HCT116 (cell line): ENCODE measurements at regions of chr1 and their contacts with region 1.

Region 1: GRCh38 chr1:34597877-34598514 is 156.9 kb upstream of the GJB5 start:
- DNase-seq: peak; percentile 50
- ATAC-seq: peak; percentile 98
- H3K4me3 ChIP-seq: no peak overlapping the region
- H3K27ac ChIP-seq: no peak overlapping the region
- H3K4me1 ChIP-seq: no peaks in the 10 kb centered on the region
- H3K27me3 ChIP-seq: peaks cover 28% of the 10 kb centered on the region
- CTCF ChIP-seq: peak; percentile 76 to 98 (median 94)
- POLR2A ChIP-seq: no peak
- RAD21 ChIP-seq: peak; percentile 90

Region 2: DNA sequence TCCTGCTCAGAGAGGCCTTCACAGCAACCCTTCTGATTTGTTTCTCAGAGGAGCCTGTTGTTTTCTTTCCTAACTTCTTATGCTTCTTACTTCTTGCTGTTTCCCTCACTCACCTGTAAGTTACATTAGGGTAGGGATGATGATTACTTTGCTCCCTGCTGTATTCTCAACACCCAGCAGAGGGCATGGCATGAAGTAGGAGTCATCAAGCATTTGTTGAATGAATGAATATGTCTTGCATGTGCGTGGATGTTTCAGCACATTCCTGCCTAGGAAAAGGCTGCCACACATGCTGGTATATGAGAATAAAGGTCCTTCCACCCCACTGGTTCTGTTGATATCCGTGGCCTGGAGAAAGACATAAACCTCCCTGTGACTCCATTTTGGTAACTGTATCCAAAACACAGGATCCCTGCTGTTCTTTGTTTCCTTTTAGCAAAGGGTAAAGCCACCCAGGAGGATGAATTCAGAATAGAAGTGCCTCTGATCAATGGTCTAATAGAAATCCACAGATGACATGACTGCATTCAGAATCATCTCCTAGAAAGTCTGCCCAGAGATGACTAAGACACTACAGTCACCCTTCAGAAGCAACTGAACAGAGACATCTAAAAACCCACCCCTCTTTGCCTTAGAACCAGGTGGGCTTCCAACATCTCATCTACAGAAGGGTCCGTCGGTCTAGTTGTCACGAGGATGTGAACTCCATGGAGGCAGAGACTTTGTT is 956.7 kb before region 1 on chr1:
- CTCF ChIA-PET with region 1: no interaction called
- POLR2A ChIA-PET with region 1: no interaction called
- RAD21 ChIA-PET with region 1: no interaction called
- intact Hi-C with region 1: loop called (anchors 1 kb)
- DNase-seq: peak; percentile 32
- ATAC-seq: peak; percentile 89
- H3K4me3 ChIP-seq: no peak overlapping the region
- H3K27ac ChIP-seq: no peak overlapping the region
- H3K4me1 ChIP-seq: no peaks in the 10 kb centered on the region
- H3K27me3 ChIP-seq: peaks cover 35% of the 10 kb centered on the region; the same call in 1 of the 2 replicates
- CTCF ChIP-seq: peak; percentile 40 to 68 (median 65); a peak in 5 of 6 replicates
- POLR2A ChIP-seq: no peak
- RAD21 ChIP-seq: peak; percentile 52

Region 3: GRCh38 chr1:33735621-33736020 is 862.4 kb before region 1 on chr1:
- CTCF ChIA-PET with region 1: no interaction called
- POLR2A ChIA-PET with region 1: no interaction called
- RAD21 ChIA-PET with region 1: no interaction called
- intact Hi-C with region 1: loop called (anchors 10 kb)
- DNase-seq: peak; percentile 1
- ATAC-seq: 0 out of 2 replicates have a peak, but pooled peaks have one; percentile 32
- H3K4me3 ChIP-seq: no peak overlapping the region
- H3K27ac ChIP-seq: no peak overlapping the region
- H3K4me1 ChIP-seq: no peaks in the 10 kb centered on the region
- H3K27me3 ChIP-seq: peaks cover 69% of the 10 kb centered on the region
- CTCF ChIP-seq: peak; percentile 14 to 53 (median 37); a peak in 3 of 6 replicates
- POLR2A ChIP-seq: no peak
- RAD21 ChIP-seq: peak; percentile 60

Region 4: GRCh38 chr1:34113887-34114286 is 484.1 kb before region 1 on chr1:
- CTCF ChIA-PET with region 1: interaction called, 5 read pairs
- POLR2A ChIA-PET with region 1: no interaction called
- RAD21 ChIA-PET with region 1: no interaction called
- intact Hi-C with region 1: loop called (anchors 1 kb)
- DNase-seq: peak; percentile 32
- ATAC-seq: peak; percentile 58; the same call in 1 of the 2 replicates
- H3K4me3 ChIP-seq: no peak overlapping the region
- H3K27ac ChIP-seq: no peak overlapping the region
- H3K4me1 ChIP-seq: no peaks in the 10 kb centered on the region
- H3K27me3 ChIP-seq: peaks cover 6% of the 10 kb centered on the region; the same call in 1 of the 2 replicates
- CTCF ChIP-seq: peak; percentile 43 to 56 (median 52); a peak in 5 of 6 replicates
- POLR2A ChIP-seq: no peak
- RAD21 ChIP-seq: peak; percentile 44; the same call in 1 of the 2 replicates

Region 5: GRCh38 chr1:34460193-34460592 is 137.8 kb before region 1 on chr1:
- CTCF ChIA-PET with region 1: interaction called, 10 read pairs
- POLR2A ChIA-PET with region 1: no interaction called
- RAD21 ChIA-PET with region 1: interaction called in 1 of 2 experiments, 3 read pairs
- intact Hi-C with region 1: loop called (anchors 1 kb)
- DNase-seq: peak; percentile 47
- ATAC-seq: peak; percentile 90
- H3K4me3 ChIP-seq: no peak overlapping the region
- H3K27ac ChIP-seq: no peak overlapping the region
- H3K4me1 ChIP-seq: no peaks in the 10 kb centered on the region
- H3K27me3 ChIP-seq: no peaks in the 10 kb centered on the region; the same call in 1 of the 2 replicates
- CTCF ChIP-seq: peak; percentile 59 to 88 (median 75)
- POLR2A ChIP-seq: no peak
- RAD21 ChIP-seq: peak; percentile 65

Region 6: DNA sequence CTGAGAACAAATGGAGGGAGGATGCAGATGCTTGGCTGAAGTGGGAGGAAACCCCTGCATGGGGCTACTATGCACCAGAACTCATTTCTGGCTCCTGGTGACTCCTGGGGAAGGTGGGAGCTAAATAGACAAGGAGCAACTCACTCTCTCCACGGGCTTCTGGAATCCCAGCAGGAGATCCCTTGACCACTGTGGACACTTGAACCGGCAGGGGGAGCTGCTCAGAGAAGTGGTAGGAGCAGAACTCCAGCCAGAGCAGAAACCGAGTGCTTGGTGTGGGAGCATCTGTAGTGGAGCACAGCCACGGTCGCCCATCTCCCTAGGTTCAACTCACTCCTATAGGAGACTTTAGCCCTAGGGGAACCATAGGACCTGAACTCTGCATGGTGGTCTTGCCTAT is 48.8 kb before region 1 on chr1:
- CTCF ChIA-PET with region 1: no interaction called
- POLR2A ChIA-PET with region 1: no interaction called
- RAD21 ChIA-PET with region 1: no interaction called
- intact Hi-C with region 1: loop called (anchors 2 kb)
- DNase-seq: peak; percentile 10
- ATAC-seq: peak; percentile 92
- H3K4me3 ChIP-seq: no peak overlapping the region
- H3K27ac ChIP-seq: no peak overlapping the region
- H3K4me1 ChIP-seq: no peaks in the 10 kb centered on the region
- H3K27me3 ChIP-seq: no peaks in the 10 kb centered on the region
- CTCF ChIP-seq: peak; percentile 39 to 73 (median 64); a peak in 5 of 6 replicates
- POLR2A ChIP-seq: no peak
- RAD21 ChIP-seq: peak; percentile 31; the same call in 1 of the 2 replicates